ENCODE measurements at regions of chr20 and their contacts with region 1.

Region 1: GRCh38 chr20:3710703-3711483 is 1.5 kb downstream of the SIGLEC1 start:
- DNase-seq: peak; percentile 57 to 88
- ATAC-seq: peak; percentile 20 to 83; a peak in 4 of 6 replicates
- H3K4me3 ChIP-seq: no peak overlapping the region
- H3K27ac ChIP-seq: no peak overlapping the region
- H3K4me1 ChIP-seq: no peaks in the 10 kb centered on the region
- CTCF ChIP-seq: peak; percentile 90
- EP300 ChIP-seq: no peak
- POLR2A ChIP-seq: no peak
- RAD21 ChIP-seq: peak; percentile 75 to 76

Region 2: GRCh38 chr20:3563548-3564177 is 147.2 kb before region 1 on chr20:
- CTCF ChIA-PET with region 1: interaction called, 26 read pairs
- POLR2A ChIA-PET with region 1: no interaction called
- DNase-seq: peak; percentile 37 to 70
- ATAC-seq: peak; percentile 85
- H3K4me3 ChIP-seq: no peak overlapping the region
- H3K27ac ChIP-seq: no peak overlapping the region
- H3K4me1 ChIP-seq: peaks cover 10% of the 10 kb centered on the region; the same call in 2 of the 3 replicates
- CTCF ChIP-seq: peak; percentile 93
- EP300 ChIP-seq: no peak
- POLR2A ChIP-seq: no peak
- RAD21 ChIP-seq: peak; percentile 81 to 86

Region 3: GRCh38 chr20:3727401-3728021 is 16.6 kb after region 1 on chr20:
- CTCF ChIA-PET with region 1: interaction called, 2,233 read pairs
- POLR2A ChIA-PET with region 1: no interaction called
- DNase-seq: no peak
- ATAC-seq: peak; percentile 37 to 41; a peak in 4 of 6 replicates
- H3K4me3 ChIP-seq: no peak overlapping the region
- H3K27ac ChIP-seq: no peak overlapping the region
- H3K4me1 ChIP-seq: peaks cover 10% of the 10 kb centered on the region
- CTCF ChIP-seq: no peak
- EP300 ChIP-seq: no peak
- POLR2A ChIP-seq: no peak
- RAD21 ChIP-seq: no peak

Region 4: DNA sequence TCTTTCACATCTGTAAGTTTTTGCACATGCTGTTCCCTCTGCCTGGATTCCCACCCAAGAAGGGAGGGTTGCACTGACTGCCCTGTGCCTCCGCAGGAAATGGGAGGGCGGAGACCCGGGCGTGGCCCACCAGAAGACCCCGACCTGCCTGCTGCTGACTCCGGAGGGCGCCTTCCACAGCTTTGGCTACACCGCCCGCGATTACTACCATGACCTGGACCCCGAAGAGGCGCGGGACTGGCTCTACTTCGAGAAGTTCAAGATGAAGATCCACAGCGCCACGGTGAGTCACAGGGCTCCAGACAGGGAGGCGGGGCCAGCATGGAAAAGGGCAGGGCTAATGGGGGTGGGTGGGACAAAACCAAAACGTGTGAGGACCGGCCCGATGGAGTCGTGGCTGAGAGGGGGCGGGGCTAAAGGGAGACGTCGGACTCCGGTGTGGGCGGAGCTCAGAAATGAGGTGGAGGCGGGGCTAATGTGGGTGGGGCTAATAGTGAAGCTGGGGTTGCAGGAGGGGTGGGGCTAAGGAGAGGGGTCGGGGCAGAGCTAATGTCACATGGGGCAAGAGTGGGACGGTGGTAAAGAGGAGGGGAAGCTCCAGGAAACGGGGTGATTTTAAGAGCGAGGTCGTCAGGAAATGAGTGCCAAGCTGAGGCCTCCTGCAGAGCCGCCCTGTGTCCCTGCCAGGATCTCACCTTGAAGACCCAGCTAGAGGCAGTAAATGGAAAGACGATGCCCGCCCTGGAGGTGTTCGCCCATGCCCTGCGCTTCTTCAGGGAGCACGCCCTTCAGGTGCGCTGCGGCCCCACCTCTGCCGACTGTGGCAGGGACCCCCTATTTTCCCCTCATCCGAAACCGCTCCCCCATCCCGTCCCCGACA is 34.2 kb after region 1 on chr20:
- CTCF ChIA-PET with region 1: interaction called, 2,233 read pairs
- POLR2A ChIA-PET with region 1: no interaction called
- DNase-seq: peak; percentile 94 to 95
- ATAC-seq: peak; percentile 62 to 77
- H3K4me3 ChIP-seq: peak overlapping the region; percentile 44
- H3K27ac ChIP-seq: peak overlapping the region; percentile 64 to 75
- H3K4me1 ChIP-seq: peaks cover 4% of the 10 kb centered on the region; the same call in 1 of the 3 replicates
- CTCF ChIP-seq: no peak
- EP300 ChIP-seq: no peak
- POLR2A ChIP-seq: no peak
- RAD21 ChIP-seq: no peak

Region 5: GRCh38 chr20:3760655-3761348 is 49.9 kb after region 1 on chr20:
- CTCF ChIA-PET with region 1: interaction called, 2,233 read pairs
- POLR2A ChIA-PET with region 1: no interaction called
- DNase-seq: no peak
- ATAC-seq: no peak
- H3K4me3 ChIP-seq: no peak overlapping the region
- H3K27ac ChIP-seq: no peak overlapping the region
- H3K4me1 ChIP-seq: peaks cover under 1% of the 10 kb centered on the region; the same call in 1 of the 3 replicates
- CTCF ChIP-seq: no peak
- EP300 ChIP-seq: no peak
- POLR2A ChIP-seq: no peak
- RAD21 ChIP-seq: no peak

Measured in A549 (cell line).